Activated T-helper 1 cell treated with anti-CD3 and anti-CD28 coated beads, Interleukin-12 subunit alpha, Interleukin-12 subunit beta, Interleukin-2, Interleukin-4 antibody, amounts not matched to agents 30 ng/mL and 10 ng/mL and 1 ng/mL, durations not matched to agents 14 hours and 24 hours and 36 hours (primary cell): ENCODE measurements at regions of chr4 and their contacts with region 1.

Region 1: DNA sequence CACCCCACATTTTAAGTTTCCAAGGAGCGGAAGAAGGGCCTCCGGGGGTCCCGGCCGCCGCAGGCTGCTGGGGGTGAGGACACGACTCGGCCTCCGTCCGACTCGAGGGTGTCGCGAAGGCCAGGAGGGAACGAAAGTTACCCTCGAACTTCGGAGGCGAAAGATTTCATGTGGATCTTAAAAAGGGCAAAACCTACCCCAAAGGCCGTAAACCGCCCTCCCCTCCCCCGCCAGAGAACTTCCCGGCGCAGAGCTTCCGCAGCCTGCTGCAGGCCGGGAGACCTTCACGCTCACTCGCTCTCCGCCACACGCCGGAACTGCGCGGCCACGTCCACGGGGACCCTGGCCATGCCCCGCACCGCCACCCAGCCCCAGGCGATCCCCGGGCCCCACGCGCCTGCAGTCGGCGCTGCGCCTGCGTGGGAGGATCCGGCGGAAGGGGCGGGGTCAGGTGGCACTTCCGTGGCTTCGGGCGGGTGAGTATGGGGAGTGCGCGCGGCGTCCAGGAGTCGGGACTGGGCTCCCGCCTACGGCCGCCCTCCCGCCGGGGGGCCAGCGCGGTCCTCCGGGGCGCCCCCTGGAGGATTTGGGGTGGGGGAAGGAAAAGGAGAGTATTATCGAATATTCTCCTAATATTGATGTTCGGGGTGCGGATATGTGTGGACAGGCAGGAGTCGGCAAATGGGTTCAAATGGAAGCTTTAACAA is at the start of gene MMAA:
- DNase-seq: peak; percentile 95
- H3K4me3 Mint-ChIP-seq: peak within 1 kb of the TSS; percentile 97
- H3K27ac Mint-ChIP-seq: peak within 1 kb of the TSS; percentile 99
- H3K4me1 Mint-ChIP-seq: peaks cover 49% of the 10 kb centered on the region
- H3K27me3 Mint-ChIP-seq: peaks cover 2% of the 10 kb centered on the region
- total RNA-seq, gene MMAA: 18.1 and 20.8 TPM in 2 replicates

Region 2: GRCh38 chr4:144421839-144422565 is 1197.1 kb before region 1 on chr4:
- intact Hi-C with region 1: no loop called
- DNase-seq: no peak
- H3K4me3 Mint-ChIP-seq: no peak overlapping the region
- H3K27ac Mint-ChIP-seq: no peak overlapping the region
- H3K4me1 Mint-ChIP-seq: no peaks in the 10 kb centered on the region
- H3K27me3 Mint-ChIP-seq: no peaks in the 10 kb centered on the region

Region 3: DNA sequence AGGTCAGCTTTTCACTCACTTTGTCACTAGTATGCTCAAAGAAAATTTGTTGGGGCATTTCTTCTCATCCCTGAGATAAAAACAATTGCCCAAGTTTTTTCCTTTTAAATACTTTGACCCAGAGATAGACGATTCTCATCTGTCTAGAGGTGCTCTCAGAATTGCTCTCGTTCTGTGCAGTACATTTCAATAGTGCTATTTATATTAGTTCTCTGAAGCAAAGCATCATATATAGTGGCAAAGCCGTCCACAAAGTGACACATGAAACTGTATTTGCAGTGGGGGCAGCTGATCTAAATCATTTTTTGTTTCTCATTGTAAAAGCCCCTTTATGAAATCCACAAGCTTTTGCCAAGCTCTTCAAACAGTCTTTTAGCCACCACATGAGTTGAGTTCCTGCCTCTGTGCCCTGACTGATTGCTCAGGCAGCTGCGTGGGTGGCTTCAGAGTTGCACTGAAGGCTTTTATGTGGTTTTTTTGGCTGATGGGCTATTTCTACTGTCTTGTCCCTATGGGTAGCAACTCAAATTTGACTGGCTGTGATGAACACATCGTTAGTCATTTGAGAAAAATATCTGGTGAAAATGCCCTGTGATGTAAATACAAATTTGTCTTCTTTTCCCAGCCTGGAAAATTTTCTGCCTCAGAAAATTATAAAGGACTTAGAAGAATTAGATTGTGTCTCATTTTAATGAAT is 319.6 kb before region 1 on chr4:
- intact Hi-C with region 1: loop called (anchors 1 kb)
- DNase-seq: peak; percentile 2
- H3K4me3 Mint-ChIP-seq: no peak overlapping the region
- H3K27ac Mint-ChIP-seq: no peak overlapping the region
- H3K4me1 Mint-ChIP-seq: peaks cover 17% of the 10 kb centered on the region
- H3K27me3 Mint-ChIP-seq: peaks cover 6% of the 10 kb centered on the region

Region 4: DNA sequence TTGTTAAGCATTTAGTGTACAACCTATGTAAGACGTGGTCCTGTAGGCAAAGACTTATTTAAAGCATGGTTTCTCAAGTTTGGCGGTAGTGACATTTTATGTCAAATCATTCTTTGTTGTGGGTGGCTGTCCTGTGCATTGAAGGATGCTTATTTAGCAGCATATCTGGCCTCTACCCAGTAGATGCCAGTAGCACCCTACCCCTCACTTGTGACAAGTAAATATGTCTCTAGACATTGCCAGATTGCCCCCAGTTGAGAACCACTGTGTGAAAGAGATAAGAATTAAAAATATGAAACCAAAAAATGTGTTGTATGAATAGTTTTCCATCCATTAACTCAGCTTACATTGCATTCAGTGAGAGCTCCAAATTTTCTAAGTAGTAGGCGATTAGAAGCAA is 25.6 kb after region 1 on chr4:
- intact Hi-C with region 1: loop called (anchors 2 kb)
- DNase-seq: no peak
- H3K4me3 Mint-ChIP-seq: no peak overlapping the region
- H3K27ac Mint-ChIP-seq: no peak overlapping the region
- H3K4me1 Mint-ChIP-seq: peaks cover 12% of the 10 kb centered on the region
- H3K27me3 Mint-ChIP-seq: no peaks in the 10 kb centered on the region

Region 5: GRCh38 chr4:145808021-145808650 is 189.1 kb after region 1 on chr4:
- intact Hi-C with region 1: loop called (anchors 1 kb)
- DNase-seq: peak; percentile 56
- H3K4me3 Mint-ChIP-seq: peak overlapping the region; percentile 49
- H3K27ac Mint-ChIP-seq: peak overlapping the region; percentile 96
- H3K4me1 Mint-ChIP-seq: peaks cover 47% of the 10 kb centered on the region
- H3K27me3 Mint-ChIP-seq: no peaks in the 10 kb centered on the region

Region 6: GRCh38 chr4:145936142-145936996 is 317.3 kb after region 1 on chr4:
- intact Hi-C with region 1: loop called (anchors 1 kb)
- DNase-seq: peak; percentile 41
- H3K4me3 Mint-ChIP-seq: peak overlapping the region; percentile 95
- H3K27ac Mint-ChIP-seq: peak overlapping the region; percentile 96
- H3K4me1 Mint-ChIP-seq: peaks cover 48% of the 10 kb centered on the region
- H3K27me3 Mint-ChIP-seq: peaks cover 3% of the 10 kb centered on the region

Region 7: DNA sequence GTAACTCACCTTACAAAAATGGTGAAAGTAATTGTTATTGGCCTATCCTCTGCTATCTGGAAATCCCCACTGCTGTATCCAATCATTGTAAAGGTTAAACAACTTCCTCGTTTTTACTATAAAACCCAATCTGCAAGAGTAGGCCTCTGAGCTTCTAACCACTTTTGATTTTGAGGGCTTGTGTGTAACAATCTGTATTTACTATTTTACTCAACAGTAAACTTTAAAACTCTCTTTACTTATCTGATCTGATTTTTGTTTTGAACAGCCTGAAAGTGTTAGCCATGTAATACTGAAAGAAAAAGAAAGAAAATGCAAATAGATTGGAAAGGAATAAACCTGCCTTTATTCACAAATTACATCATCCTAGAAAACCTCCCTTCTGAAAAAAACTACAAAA is 839.5 kb after region 1 on chr4:
- intact Hi-C with region 1: loop called (anchors 5 kb)
- DNase-seq: no peak
- H3K4me3 Mint-ChIP-seq: peak overlapping the region; percentile 63
- H3K27ac Mint-ChIP-seq: peak overlapping the region; percentile 88
- H3K4me1 Mint-ChIP-seq: peaks cover 26% of the 10 kb centered on the region
- H3K27me3 Mint-ChIP-seq: no peaks in the 10 kb centered on the region